ENCODE measurements at regions of chr1 and their contacts with region 1.

Region 1: GRCh38 chr1:28648474-28649198 is at the start of gene RNU11:
- DNase-seq: peak; percentile 82
- total RNA-seq, gene RNU11: not detected

Region 2: DNA sequence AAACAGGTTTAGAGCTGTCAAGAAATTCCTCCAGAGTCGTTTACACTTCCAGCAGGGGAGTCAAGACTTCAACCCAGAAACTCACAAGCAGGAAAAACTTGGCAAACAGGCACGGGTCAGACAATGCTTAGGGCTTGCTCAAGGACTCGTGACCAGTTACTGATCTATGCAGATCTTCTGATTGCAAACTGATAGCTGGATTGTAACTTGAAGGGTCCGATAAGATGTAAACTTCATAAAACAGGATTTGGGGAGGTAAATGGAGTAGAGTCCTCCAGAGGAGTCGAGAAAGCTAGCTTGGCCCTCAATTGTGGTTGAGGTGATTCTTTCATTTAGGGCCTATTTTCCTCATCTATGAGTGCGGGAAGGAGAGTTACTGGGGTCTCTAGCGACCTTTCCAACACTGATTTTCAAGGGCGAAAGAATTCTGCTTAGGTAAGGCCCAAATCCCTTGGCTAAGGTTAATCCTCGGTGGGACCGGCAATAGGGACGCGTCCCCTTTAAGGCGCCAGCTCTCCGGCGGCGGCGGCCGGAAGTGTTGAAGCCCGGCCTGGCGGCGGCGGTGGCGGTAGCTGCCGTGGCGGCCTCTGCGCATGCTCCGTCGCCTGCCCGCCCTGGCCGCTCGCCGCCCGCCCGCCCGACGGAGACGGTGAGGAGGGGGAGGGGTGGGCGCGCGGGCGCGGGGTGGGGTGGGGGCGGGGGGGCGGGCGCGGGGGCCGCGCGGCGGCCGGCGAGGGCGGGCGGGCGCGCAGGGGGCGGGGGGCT is 19.7 kb after region 1 on chr1 and contains the start of gene GMEB1:
- intact Hi-C with region 1: loop called (anchors 1 kb)
- DNase-seq: peak; percentile 94
- total RNA-seq, gene GMEB1: 8.2 TPM

Measured in cardiac septum (tissue), 1 donor.